ENCODE measurements at regions of chr13 and their contacts with region 1.

Region 1: DNA sequence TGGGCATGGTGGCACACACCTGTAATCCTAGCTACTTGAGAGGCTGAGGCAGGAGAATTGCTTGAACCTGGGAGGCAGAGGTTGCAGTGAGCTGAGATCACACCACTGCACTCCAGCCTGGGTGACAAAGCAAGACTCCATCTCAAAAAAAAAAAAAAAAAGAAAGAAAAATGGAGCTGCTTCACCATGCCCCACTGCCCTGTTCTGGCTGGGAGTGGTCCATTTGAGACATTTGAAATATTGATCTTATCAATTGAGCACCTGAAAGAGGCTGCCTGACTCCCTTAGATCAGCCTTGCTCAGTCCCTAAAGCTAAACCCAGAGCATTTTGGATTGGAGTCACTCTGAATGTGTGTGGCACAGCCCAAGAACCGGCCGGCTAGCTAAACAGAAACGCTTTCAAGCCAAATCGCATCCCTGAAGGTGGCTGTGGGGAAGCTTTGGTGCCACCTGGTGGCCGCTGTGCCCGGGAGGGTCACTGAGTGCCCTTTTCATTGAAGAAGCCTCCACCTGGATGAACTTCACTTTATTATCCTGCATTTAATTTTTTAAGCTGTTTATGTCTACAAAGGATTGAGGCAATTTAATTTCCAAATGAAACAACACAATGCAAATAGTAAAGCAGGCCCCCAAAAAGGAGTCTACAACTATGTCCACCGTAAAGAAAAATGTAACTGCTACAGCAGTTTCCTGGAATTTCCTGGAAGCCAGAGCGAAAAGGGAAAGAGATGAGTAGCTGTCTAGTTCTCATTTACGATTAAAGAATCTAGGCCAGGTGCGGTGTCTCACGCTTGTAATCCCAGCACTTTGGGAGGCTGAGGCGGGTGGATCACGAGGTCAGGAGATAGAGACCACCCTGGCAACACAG is 53.1 kb upstream of the SERPINE3 start:
- DNase-seq: peak; percentile 43
- H3K4me3 ChIP-seq: no peak overlapping the region
- H3K27ac ChIP-seq: no peak overlapping the region
- H3K4me1 ChIP-seq: no peaks in the 10 kb centered on the region
- H3K27me3 ChIP-seq: no peaks in the 10 kb centered on the region
- CTCF ChIP-seq: peak; percentile 98

Region 2: GRCh38 chr13:51083706-51084105 is 202.7 kb before region 1 on chr13:
- CTCF ChIA-PET with region 1: no interaction called
- dilution Hi-C with region 1: no loop called
- in situ Hi-C with region 1: no loop called
- intact Hi-C with region 1: no loop called
- DNase-seq: no peak
- H3K4me3 ChIP-seq: no peak overlapping the region
- H3K27ac ChIP-seq: no peak overlapping the region
- H3K4me1 ChIP-seq: no peaks in the 10 kb centered on the region
- H3K27me3 ChIP-seq: no peaks in the 10 kb centered on the region
- CTCF ChIP-seq: no peak

Region 3: GRCh38 chr13:51125498-51126226 is 160.7 kb before region 1 on chr13:
- CTCF ChIA-PET with region 1: interaction called, 21 read pairs
- dilution Hi-C with region 1: no loop called
- in situ Hi-C with region 1: loop called (anchors 10 kb)
- intact Hi-C with region 1: loop called (anchors 1 kb)
- DNase-seq: peak; percentile 22
- H3K4me3 ChIP-seq: no peak overlapping the region
- H3K27ac ChIP-seq: no peak overlapping the region
- H3K4me1 ChIP-seq: no peaks in the 10 kb centered on the region
- H3K27me3 ChIP-seq: no peaks in the 10 kb centered on the region
- CTCF ChIP-seq: peak; percentile 84 to 89

Region 4: DNA sequence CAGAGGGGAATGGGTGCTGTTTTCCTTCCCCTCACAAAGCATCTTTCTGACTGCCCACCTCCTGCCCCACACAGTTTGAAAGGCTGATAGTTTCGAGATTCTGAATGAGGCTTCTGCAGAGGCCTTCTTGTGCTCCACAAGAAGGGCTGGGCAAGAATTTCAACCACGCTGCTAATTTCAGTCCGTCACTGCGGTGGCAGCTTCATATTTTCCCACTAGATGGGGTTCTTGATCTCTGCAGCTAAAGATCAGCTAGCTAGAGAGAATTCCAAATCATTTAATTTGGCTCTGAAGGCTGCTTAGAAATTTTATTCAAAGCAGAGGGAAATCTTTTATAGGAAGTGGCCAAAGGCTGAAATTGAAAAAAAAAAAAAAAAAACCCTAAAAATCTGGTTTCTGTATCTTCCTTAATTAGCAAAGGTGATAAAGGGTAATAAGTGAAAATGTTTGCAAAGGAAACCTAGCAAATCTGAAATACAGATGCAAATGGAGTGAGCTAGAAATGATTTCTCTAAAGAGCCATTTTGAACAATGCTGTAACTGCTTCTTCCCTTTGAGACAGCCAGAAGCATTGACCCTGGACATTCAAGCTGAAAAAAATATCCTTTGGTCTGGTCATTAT is 137.3 kb before region 1 on chr13:
- CTCF ChIA-PET with region 1: interaction called, 32 read pairs
- dilution Hi-C with region 1: no loop called
- in situ Hi-C with region 1: loop called in 1 of 2 experiments (anchors 10 kb)
- intact Hi-C with region 1: loop called (anchors 1 kb)
- DNase-seq: peak; percentile 8
- H3K4me3 ChIP-seq: no peak overlapping the region
- H3K27ac ChIP-seq: no peak overlapping the region
- H3K4me1 ChIP-seq: no peaks in the 10 kb centered on the region
- H3K27me3 ChIP-seq: peaks cover 2% of the 10 kb centered on the region
- CTCF ChIP-seq: peak; percentile 49 to 69

Region 5: GRCh38 chr13:51154029-51154555 is 132.3 kb before region 1 on chr13:
- CTCF ChIA-PET with region 1: interaction called, 32 read pairs
- dilution Hi-C with region 1: no loop called
- in situ Hi-C with region 1: loop called in 1 of 2 experiments (anchors 10 kb)
- intact Hi-C with region 1: loop called (anchors 1 kb)
- DNase-seq: no peak
- H3K4me3 ChIP-seq: no peak overlapping the region
- H3K27ac ChIP-seq: no peak overlapping the region
- H3K4me1 ChIP-seq: no peaks in the 10 kb centered on the region
- H3K27me3 ChIP-seq: no peaks in the 10 kb centered on the region
- CTCF ChIP-seq: no peak

Region 6: DNA sequence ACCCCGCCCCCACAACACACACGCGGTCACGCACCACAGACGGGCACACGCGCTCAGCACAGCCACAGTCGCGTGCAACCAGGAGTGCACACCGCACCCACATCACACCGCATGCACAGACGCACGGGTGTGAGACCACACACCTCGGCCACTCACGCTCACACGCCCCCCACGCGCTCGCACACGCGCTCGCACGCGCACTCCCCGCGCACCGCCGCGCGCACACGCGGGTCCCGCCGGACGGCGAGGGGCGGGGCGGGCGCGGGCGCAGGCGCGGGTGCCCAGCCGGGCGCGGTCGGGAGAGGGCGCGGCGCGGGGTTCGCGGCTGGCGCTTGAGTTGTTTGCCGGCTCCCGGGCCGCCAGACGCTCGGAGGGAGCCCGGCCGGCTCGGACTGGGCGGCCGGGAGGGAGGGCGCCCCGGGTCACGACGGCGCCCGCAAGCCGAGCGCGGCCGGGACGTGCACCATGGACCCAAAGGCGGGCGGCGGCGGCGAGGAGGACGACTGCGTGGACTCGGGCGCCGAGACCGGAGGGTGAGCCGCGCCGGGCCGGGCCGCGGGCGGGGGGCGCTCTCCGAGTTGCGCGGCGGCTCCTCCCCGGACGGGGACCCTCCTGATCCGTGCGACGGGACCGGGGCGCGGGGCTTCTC is 64.2 kb before region 1 on chr13 and contains the start of gene FAM124A:
- CTCF ChIA-PET with region 1: no interaction called
- dilution Hi-C with region 1: no loop called
- in situ Hi-C with region 1: no loop called
- intact Hi-C with region 1: loop called (anchors 5 kb)
- DNase-seq: no peak
- H3K4me3 ChIP-seq: peak within 1 kb of the TSS; percentile 40 to 82 (median 60)
- H3K27ac ChIP-seq: no peak within 1 kb of the TSS
- H3K4me1 ChIP-seq: peaks cover 11% of the 10 kb centered on the region
- H3K27me3 ChIP-seq: peaks cover 19% of the 10 kb centered on the region
- CTCF ChIP-seq: peak; percentile 11 to 20
- total RNA-seq, gene FAM124A: 0.12 to 0.33 TPM